HEK293T (cell line): ENCODE measurements at regions of chr14 and their contacts with region 1.

Region 1: DNA sequence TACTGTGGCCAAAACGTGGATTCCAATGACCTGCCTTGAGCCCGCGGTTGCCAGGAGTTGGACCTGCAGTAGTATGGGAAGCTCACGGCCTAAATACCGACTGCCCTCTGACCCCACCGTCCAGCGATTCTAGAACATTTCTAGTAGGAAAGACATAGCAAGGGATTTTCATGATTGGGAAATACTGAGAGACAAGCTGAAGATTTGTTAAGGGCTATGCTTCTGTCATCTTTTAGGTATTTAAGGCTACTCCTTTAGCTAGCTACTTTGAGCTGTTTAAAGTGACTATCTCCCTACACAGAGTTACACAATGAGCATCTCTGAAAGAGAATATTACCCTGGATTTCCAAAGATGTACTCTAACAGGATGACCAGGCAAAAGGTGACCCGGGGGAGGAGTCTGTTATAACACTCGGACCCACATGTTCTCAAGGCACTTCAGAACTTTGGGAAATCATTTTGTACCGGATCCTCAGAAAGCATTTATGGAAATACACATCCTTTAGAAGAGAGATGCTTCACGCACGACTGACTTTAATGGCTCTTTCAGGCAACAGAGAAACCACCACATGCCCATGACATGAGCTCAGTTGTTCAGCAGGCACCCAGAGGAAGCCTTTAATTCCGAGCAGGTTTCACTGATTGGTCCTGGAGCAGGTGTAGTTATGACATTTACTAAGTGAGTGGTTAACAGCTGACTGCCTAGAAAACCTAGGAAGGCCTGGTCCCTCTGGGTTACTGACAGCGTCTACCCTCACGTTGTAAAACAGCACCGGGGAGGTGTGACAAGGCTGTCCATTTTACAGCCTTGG is 4.2 kb downstream of the BAG5 start:
- DNase-seq: no peak

Region 2: GRCh38 chr14:103528587-103529382 is 29.5 kb before region 1 on chr14 and contains the start of gene TRMT61A:
- CTCF ChIA-PET with region 1: no interaction called
- POLR2A ChIA-PET with region 1: interaction called, 10 read pairs
- DNase-seq: peak; percentile 94

Region 3: DNA sequence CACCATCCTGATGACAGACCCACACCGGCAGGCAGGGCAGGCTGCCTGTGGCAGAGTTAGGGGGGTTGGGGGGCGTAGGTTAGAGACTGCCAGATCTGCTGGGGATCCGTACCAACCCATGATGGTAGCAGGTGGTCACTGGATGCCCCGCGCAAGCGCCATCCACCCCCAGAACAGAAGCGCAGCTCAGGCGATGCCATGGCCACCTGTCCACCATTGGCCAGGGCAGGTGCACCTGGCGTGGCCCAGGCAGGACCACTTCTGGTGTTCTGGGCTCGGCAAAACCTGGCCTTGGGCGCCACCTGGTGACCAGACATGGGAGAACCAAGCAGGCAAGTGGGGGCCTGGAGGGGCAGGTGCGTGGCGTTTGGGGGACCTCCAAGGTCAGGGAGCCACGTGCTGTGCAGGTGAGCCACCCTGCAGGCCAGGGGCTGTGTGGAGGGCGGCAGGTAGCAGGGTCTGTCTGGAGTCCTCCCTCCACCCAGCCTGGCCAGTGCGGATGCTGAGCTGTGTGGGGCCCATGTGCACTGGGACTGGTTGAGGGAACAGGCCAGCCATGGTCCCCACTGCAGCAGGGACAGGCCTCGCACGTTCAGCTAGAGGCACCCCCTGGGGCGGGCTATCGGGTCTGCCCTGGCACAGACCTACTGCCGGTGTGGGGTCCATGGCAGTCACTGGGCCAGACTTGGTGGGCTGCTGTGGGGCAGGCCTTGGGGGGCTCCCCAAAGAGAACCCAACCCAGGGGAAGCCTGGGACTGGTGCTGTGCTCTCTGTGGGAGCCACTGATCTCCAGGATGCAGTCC is 11.4 kb before region 1 on chr14:
- CTCF ChIA-PET with region 1: interaction called, 17 read pairs
- POLR2A ChIA-PET with region 1: interaction called, 3 read pairs
- DNase-seq: peak; percentile 85

Region 4: GRCh38 chr14:103629503-103630121 is 71.3 kb after region 1 on chr14:
- CTCF ChIA-PET with region 1: no interaction called
- POLR2A ChIA-PET with region 1: no interaction called
- DNase-seq: peak; percentile 71